ENCODE measurements at regions of chr21 and their contacts with region 1.

Region 1: GRCh38 chr21:45973659-45974072 is 7.9 kb upstream of the COL6A1 start:
- DNase-seq: no peak
- ATAC-seq: peak; percentile 29 to 43
- H3K4me3 ChIP-seq: peak overlapping the region; percentile 64 to 88 (median 64)
- H3K27ac ChIP-seq: peak overlapping the region; percentile 81 to 89 (median 84)
- H3K4me1 ChIP-seq: peaks cover 27 to 31% of the 10 kb centered on the region in 2 donors
- H3K27me3 ChIP-seq: peaks cover 21 to 30% (median 23%) of the 10 kb centered on the region in 3 donors
- CTCF ChIP-seq: peak; percentile 39 to 73 (median 53)
- POLR2A ChIP-seq: peak; percentile 7 to 28

Region 2: DNA sequence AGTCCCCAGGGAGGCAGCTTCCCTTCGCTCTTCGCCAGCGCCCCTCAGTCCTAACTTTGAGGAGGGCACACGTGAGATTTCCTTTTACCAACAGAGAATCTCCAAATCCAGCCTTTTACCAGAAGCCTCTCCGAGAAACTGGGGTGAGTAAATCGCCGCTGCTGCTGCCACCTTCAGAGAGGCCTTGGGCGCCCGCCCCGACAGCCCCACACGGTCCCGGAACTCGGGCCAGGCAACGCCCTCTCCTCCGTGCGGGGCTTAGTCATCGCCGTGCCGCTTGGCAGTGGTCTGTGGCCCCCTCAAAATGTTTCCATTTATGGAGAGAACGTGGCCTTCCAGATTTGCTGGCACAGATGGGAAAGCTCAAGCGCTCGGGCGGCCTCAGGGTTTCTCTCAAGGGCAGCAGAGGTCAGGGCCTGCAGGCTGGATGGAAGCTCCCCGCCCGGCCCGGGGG is 82.8 kb after region 1 on chr21:
- in situ Hi-C with region 1: no loop called
- intact Hi-C with region 1: loop called (anchors 5 kb)
- DNase-seq: peak; percentile 44 to 61
- ATAC-seq: peak; percentile 41 to 57
- H3K4me3 ChIP-seq: peak overlapping the region in 1 of 4 donors; percentile 6
- H3K27ac ChIP-seq: peak overlapping the region; percentile 68 to 78 (median 75)
- H3K4me1 ChIP-seq: peaks cover 0 to 3% of the 10 kb centered on the region in 2 donors
- H3K27me3 ChIP-seq: peaks cover 8 to 19% (median 11%) of the 10 kb centered on the region in 3 donors
- CTCF ChIP-seq: no peak
- POLR2A ChIP-seq: peak in 1 of 2 donors; percentile 9

Region 3: GRCh38 chr21:46097336-46098293 is 123.9 kb after region 1 on chr21 and contains the start of gene COL6A2:
- in situ Hi-C with region 1: loop called in 3 of 4 experiments (anchors 10 to 25 kb)
- intact Hi-C with region 1: loop called (anchors 2 kb)
- DNase-seq: peak in 1 of 2 donors; percentile 27
- ATAC-seq: peak; percentile 61 to 72
- H3K4me3 ChIP-seq: peak within 1 kb of the TSS; percentile 54 to 58 (median 56)
- H3K27ac ChIP-seq: peak within 1 kb of the TSS; percentile 67 to 83 (median 80)
- H3K4me1 ChIP-seq: no peaks in the 10 kb centered on the region
- H3K27me3 ChIP-seq: peaks cover 21 to 46% (median 25%) of the 10 kb centered on the region in 3 donors
- CTCF ChIP-seq: peak in 1 of 5 experiments; percentile 29
- POLR2A ChIP-seq: peak; percentile 48 to 65
- total RNA-seq, gene COL6A2: 44.0 to 141 (median 88.4) TPM

Region 4: GRCh38 chr21:46110499-46111192 is 137.0 kb after region 1 on chr21:
- in situ Hi-C with region 1: loop called in 3 of 4 experiments (anchors 10 to 25 kb)
- intact Hi-C with region 1: loop called (anchors 5 kb)
- DNase-seq: peak; percentile 4 to 25
- ATAC-seq: no peak
- H3K4me3 ChIP-seq: no peak overlapping the region
- H3K27ac ChIP-seq: peak overlapping the region in 1 of 4 donors; percentile 22
- H3K4me1 ChIP-seq: peaks cover 0 to 7% of the 10 kb centered on the region in 2 donors
- H3K27me3 ChIP-seq: no peaks in the 10 kb centered on the region
- CTCF ChIP-seq: no peak
- POLR2A ChIP-seq: no peak

Measured in gastrocnemius medialis (tissue), 4 donors.